ENCODE measurements at regions of chr12 and their contacts with region 1.

Region 1: GRCh38 chr12:80837348-80837985 is 100.3 kb downstream of the LIN7A start:
- DNase-seq: peak in 1 of 2 experiments; percentile 14
- H3K4me3 ChIP-seq: no peak overlapping the region
- H3K27ac ChIP-seq: no peak overlapping the region
- H3K4me1 ChIP-seq: no peaks in the 10 kb centered on the region
- H3K27me3 ChIP-seq: no peaks in the 10 kb centered on the region
- CTCF ChIP-seq: peak; percentile 74

Region 2: GRCh38 chr12:80313209-80313608 is 524.3 kb before region 1 on chr12:
- CTCF ChIA-PET with region 1: no interaction called
- POLR2A ChIA-PET with region 1: no interaction called
- intact Hi-C with region 1: no loop called
- DNase-seq: no peak
- H3K4me3 ChIP-seq: no peak overlapping the region
- H3K27ac ChIP-seq: no peak overlapping the region
- H3K4me1 ChIP-seq: no peaks in the 10 kb centered on the region
- H3K27me3 ChIP-seq: no peaks in the 10 kb centered on the region
- CTCF ChIP-seq: 0 out of 2 replicates have a peak, but pooled peaks have one; percentile 10

Region 3: GRCh38 chr12:80847575-80847974 is 10.1 kb after region 1 on chr12:
- CTCF ChIA-PET with region 1: no interaction called
- POLR2A ChIA-PET with region 1: no interaction called
- intact Hi-C with region 1: no loop called
- DNase-seq: no peak
- H3K4me3 ChIP-seq: no peak overlapping the region
- H3K27ac ChIP-seq: no peak overlapping the region
- H3K4me1 ChIP-seq: no peaks in the 10 kb centered on the region; the same call in 1 of the 2 replicates
- H3K27me3 ChIP-seq: no peaks in the 10 kb centered on the region
- CTCF ChIP-seq: no peak

Region 4: DNA sequence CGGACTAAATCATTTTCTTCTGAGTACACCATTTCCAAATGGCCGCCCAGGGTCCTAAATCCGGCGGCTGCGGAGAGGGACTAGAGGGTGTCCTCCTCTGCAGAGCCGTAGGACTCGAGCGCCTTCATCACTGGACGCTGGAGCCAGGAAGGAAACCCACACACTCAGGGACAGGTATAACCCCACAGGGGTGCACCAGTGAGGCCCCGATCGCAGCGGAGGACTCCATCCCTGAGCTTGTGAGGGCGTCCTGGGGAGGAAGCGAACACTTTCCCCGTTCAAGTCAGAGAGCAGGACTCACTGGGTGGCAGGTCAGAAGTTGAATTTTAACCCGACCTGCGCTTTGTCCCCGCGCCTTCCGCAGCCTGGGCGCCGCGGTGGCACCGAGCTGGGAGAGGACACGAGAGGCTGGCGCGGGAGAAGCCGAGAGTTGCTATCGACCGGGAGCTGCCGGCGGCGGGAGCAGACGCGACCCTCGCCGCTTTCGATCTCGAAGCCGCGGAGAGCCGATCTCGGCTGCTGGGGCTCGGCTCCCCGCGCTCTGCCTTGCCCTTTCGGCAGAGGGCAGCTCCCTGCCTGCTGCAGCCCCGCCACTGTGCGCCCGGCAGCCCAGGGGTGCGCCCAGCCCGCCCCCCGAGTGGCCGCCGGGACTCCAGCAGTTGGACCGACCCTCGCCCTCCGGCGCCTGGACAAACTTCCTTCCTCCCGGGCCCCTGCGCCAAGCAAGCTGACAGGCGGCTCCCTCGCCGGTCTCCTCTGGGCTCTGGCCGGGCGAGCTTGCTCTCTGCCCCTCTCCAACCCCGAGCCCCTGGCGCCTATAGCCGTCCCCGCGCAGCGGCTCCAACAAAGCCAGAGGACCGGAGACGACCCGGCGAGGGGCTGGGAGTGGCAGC is 99.3 kb after region 1 on chr12:
- CTCF ChIA-PET with region 1: no interaction called
- POLR2A ChIA-PET with region 1: no interaction called
- intact Hi-C with region 1: loop called (anchors 10 kb)
- DNase-seq: peak in 1 of 2 experiments; percentile 30
- H3K4me3 ChIP-seq: peak overlapping the region; percentile 67
- H3K27ac ChIP-seq: no peak overlapping the region
- H3K4me1 ChIP-seq: no peaks in the 10 kb centered on the region
- H3K27me3 ChIP-seq: peaks cover 9% of the 10 kb centered on the region
- CTCF ChIP-seq: no peak

Region 5: GRCh38 chr12:81257947-81258551 is 420.6 kb after region 1 on chr12:
- CTCF ChIA-PET with region 1: interaction called, 5 read pairs
- POLR2A ChIA-PET with region 1: no interaction called
- intact Hi-C with region 1: loop called (anchors 5 kb)
- DNase-seq: peak in 1 of 2 experiments; percentile 40
- H3K4me3 ChIP-seq: no peak overlapping the region
- H3K27ac ChIP-seq: no peak overlapping the region
- H3K4me1 ChIP-seq: no peaks in the 10 kb centered on the region
- H3K27me3 ChIP-seq: no peaks in the 10 kb centered on the region
- CTCF ChIP-seq: peak; percentile 76

Measured in PC-9 (cell line).